ENCODE measurements at regions of chr17 and their contacts with region 1.

Region 1: DNA sequence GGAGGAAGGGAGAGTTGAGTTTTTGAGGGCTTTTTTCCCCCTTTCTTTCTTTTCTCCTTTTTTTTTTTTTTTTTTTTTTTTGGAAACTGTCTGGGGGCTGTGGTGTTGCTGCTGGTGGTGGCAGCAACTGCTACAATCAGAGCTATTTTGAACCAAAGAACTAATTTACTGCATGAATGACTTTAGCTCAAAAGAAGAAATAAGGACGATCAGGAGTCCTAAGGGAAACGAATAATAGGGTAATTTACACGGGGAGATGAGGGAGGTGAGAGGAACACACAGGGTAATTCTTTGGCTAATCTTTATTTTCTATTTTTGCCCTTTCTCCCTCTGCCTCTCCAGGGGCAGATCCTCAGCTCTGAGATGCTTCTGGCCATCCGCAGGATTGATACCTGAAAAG is 119.8 kb downstream of the TMEM132E start:
- DNase-seq: no peak
- H3K4me3 ChIP-seq: no peak overlapping the region
- H3K27ac ChIP-seq: no peak overlapping the region
- H3K4me1 ChIP-seq: no peaks in the 10 kb centered on the region
- H3K27me3 ChIP-seq: no peaks in the 10 kb centered on the region
- CTCF ChIP-seq: no peak
- POLR2A ChIP-seq: no peak

Region 2: GRCh38 chr17:34567691-34568465 is 131.3 kb before region 1 on chr17:
- intact Hi-C with region 1: no loop called
- DNase-seq: no peak
- H3K4me3 ChIP-seq: no peak overlapping the region
- H3K27ac ChIP-seq: no peak overlapping the region
- H3K4me1 ChIP-seq: no peaks in the 10 kb centered on the region
- H3K27me3 ChIP-seq: no peaks in the 10 kb centered on the region
- CTCF ChIP-seq: no peak
- POLR2A ChIP-seq: no peak

Region 3: GRCh38 chr17:34793231-34793908 is 94.2 kb after region 1 on chr17:
- intact Hi-C with region 1: no loop called
- DNase-seq: no peak
- H3K4me3 ChIP-seq: no peak overlapping the region
- H3K27ac ChIP-seq: no peak overlapping the region
- H3K4me1 ChIP-seq: no peaks in the 10 kb centered on the region
- H3K27me3 ChIP-seq: no peaks in the 10 kb centered on the region
- CTCF ChIP-seq: no peak
- POLR2A ChIP-seq: no peak

Region 4: DNA sequence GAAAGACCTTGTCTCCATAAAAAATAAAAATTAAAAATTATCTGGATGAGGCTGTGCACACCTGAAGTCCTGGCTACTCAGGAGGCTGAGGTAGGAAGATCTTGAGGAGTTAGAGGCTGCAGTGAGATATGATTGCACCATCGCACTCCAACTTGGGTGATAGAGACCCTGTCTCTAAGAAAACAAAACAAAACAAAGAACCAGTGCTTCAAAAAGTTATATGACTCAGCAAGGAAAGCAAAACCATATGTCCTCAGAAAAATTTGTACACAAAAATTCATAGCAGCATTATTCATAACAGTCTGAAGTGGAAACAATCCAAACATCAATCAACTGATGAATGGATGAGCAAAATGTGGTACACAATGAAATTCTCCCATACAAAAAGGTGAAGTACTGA is 592.6 kb after region 1 on chr17:
- intact Hi-C with region 1: loop called (anchors 5 kb)
- DNase-seq: no peak
- H3K4me3 ChIP-seq: no peak overlapping the region
- H3K27ac ChIP-seq: no peak overlapping the region
- H3K4me1 ChIP-seq: no peaks in the 10 kb centered on the region
- H3K27me3 ChIP-seq: no peaks in the 10 kb centered on the region
- CTCF ChIP-seq: no peak
- POLR2A ChIP-seq: no peak

Measured in vagina (tissue), 2 donors.